Heart left ventricle (tissue), 16 donors: ENCODE measurements at regions of chr18 and their contacts with region 1.

Region 1: DNA sequence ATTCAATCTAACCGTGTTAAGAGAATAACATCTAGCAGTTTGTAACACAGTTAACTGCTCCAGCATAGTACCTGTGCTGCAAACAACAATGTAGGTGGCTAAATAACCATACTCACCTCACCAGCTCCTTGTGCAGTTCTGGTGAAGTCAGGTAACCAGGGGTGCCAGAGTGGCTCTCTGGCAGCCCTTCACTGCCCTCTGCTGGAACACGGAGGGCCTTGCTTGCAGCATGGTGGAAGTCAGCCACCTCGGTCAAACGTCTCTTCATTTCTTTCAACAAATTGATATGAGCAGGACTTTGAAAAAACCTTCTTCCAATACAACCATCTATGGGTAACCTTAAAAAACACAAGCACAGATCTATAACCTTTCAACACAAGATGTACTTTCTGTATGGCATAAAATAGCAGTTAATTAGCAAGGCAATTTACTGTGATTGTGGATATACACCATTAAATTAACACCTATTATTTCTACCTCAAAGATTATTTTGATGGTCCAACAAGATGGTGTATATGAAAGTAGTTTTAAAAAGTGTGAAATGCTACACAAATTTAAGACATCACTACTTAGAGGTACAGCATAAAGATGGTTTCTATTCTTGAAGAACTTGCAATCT is 56.6 kb downstream of the EPG5 start:
- DNase-seq: peak in 4 of 5 donors; percentile 27 to 37 (median 34)
- ATAC-seq: peak in 3 of 4 donors; percentile 46 to 70 (median 52)
- H3K4me3 ChIP-seq: no peak overlapping the region
- H3K27ac ChIP-seq: no peak overlapping the region
- H3K4me1 ChIP-seq: peaks cover 0 to 5% (median 0%) of the 10 kb centered on the region in 12 donors
- H3K27me3 ChIP-seq: no peaks in the 10 kb centered on the region
- CTCF ChIP-seq: peak; percentile 45 to 75 (median 60)
- POLR2A ChIP-seq: no peak

Region 2: GRCh38 chr18:45945669-45946068 is 35.2 kb after region 1 on chr18:
- intact Hi-C with region 1: loop called in 1 of 10 experiments (anchors 2 kb)
- DNase-seq: no peak
- ATAC-seq: no peak
- H3K4me3 ChIP-seq: no peak overlapping the region
- H3K27ac ChIP-seq: no peak overlapping the region
- H3K4me1 ChIP-seq: no peaks in the 10 kb centered on the region
- H3K27me3 ChIP-seq: no peaks in the 10 kb centered on the region
- CTCF ChIP-seq: no peak
- POLR2A ChIP-seq: no peak